ENCODE measurements at regions of chr2 and their contacts with region 1.

Region 1: GRCh38 chr2:86695053-86695691 is 24.9 kb upstream of the RMND5A start:
- DNase-seq: no peak
- ATAC-seq: peak; percentile 58
- H3K4me3 ChIP-seq: no peak overlapping the region
- H3K27ac ChIP-seq: no peak overlapping the region
- H3K4me1 ChIP-seq: no peaks in the 10 kb centered on the region
- H3K27me3 ChIP-seq: no peaks in the 10 kb centered on the region
- CTCF ChIP-seq: no peak

Region 2: DNA sequence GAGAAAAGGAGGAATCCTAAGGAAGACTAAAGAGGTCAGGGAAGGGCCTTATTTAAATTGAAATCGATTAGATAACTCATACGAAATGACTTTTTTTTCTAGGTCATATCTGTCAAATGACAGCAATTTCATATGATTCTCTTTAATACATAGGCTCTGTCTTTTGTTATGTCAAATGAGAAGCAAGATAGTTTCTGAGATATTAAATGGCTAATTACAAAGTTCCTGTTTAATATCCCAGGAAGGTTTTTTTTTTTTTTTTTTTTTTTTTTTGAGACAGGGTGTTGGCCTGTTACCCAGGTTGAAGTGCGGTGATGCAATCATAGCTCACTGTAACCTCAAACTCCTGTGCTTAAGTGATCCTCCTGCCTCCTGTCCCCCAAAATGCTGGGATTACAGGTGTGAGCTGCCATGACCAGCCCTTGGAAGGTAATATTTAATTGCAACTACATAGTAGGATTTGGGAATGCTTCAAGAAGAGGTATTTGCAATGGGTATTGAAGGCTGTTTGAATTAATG is 23.1 kb before region 1 on chr2:
- CTCF ChIA-PET with region 1: no interaction called
- POLR2A ChIA-PET with region 1: no interaction called
- in situ Hi-C with region 1: no loop called
- intact Hi-C with region 1: loop called (anchors 1 kb)
- DNase-seq: no peak
- ATAC-seq: no peak
- H3K4me3 ChIP-seq: no peak overlapping the region
- H3K27ac ChIP-seq: no peak overlapping the region
- H3K4me1 ChIP-seq: no peaks in the 10 kb centered on the region
- H3K27me3 ChIP-seq: no peaks in the 10 kb centered on the region
- CTCF ChIP-seq: no peak